CD8-positive, alpha-beta T cell (primary cell): ENCODE measurements at regions of chr20 and their contacts with region 1.

Region 1: DNA sequence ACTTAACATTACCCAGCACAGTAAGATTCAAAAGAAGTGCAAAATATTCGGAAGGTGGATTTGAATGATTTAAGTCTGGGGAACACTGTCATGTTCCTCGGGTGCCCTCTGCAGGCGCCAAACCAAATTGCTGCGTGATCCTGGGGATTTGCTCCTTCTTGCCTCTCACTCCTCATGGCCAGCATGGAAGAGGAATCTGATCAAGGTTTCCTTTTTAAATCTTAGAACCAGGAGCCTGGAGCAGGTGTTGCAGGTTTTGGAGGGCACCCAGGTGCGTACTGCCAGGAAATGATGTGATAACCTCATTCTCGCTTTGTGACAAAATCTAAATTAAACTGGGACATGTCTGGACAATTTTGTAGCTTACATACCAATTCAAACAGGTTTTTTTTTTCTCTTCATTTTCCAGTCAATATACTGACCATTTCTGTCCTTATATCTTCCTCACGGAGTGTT is 8.1 kb upstream of the PFDN4 start:
- DNase-seq: peak; percentile 46 to 80 (median 69)
- ATAC-seq: peak; percentile 63
- H3K4me3 ChIP-seq: no peak overlapping the region
- H3K4me3 Mint-ChIP-seq: no peak overlapping the region
- H3K27ac ChIP-seq: no peak overlapping the region
- H3K27ac Mint-ChIP-seq: no peak overlapping the region
- H3K4me1 ChIP-seq: no peaks in the 10 kb centered on the region
- H3K4me1 Mint-ChIP-seq: no peaks in the 10 kb centered on the region
- H3K27me3 ChIP-seq: no peaks in the 10 kb centered on the region
- H3K27me3 Mint-ChIP-seq: peaks cover 2% of the 10 kb centered on the region
- CTCF ChIP-seq: peak; percentile 95

Region 2: DNA sequence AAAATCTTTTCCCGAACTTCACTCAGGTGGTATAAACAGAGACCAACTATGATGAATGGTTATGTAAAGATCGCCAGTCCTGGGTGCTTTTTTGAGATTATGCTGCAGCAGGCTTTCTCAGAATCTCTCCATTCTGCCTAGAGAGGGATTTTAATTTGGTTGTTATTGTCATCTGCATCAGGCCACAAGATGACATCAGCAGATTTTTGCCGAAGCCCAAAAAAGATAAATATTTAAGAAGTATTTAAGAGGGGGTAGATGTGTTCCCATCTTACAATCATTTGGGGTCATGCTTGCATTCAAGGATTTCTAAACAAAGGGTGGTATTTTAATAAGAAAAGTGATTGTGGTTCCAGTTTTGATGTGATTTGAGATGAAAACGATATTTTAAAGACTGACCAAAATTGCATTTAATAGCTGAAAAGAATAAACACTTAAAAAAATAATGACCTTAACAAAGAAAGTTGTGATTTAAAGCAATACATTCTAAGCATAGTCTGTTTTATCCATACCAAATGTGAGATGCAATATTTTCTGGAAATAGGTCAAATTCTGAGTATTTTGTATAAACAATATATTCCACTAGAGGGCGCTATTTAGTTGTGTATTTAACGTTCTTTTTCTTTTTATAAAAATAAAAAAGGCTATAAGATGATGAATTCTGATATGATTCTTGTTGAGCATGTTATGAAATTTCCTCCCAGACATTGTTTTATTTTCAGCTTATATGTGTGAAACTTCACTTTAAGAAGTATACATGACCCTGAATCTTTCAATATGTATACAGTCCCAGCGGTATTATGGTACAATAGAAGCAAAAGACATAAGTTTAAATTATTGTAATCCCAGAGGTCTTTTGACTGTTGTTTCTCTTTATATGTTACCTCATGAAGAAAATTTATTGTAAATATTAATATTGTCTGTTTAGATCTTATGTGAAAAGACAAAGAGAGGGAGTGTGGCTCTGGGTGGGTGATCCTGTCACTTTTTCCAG is 1957.2 kb before region 1 on chr20:
- CTCF ChIA-PET with region 1: interaction called, 3 read pairs
- POLR2A ChIA-PET with region 1: no interaction called
- intact Hi-C with region 1: loop called (anchors 2 kb)
- DNase-seq: peak in 2 of 9 experiments; percentile 16 to 30
- ATAC-seq: no peak
- H3K4me3 ChIP-seq: no peak overlapping the region
- H3K4me3 Mint-ChIP-seq: no peak overlapping the region
- H3K27ac ChIP-seq: no peak overlapping the region
- H3K27ac Mint-ChIP-seq: no peak overlapping the region
- H3K4me1 ChIP-seq: no peaks in the 10 kb centered on the region
- H3K4me1 Mint-ChIP-seq: no peaks in the 10 kb centered on the region
- H3K27me3 ChIP-seq: no peaks in the 10 kb centered on the region
- H3K27me3 Mint-ChIP-seq: peaks cover 10% of the 10 kb centered on the region
- CTCF ChIP-seq: peak; percentile 84

Region 3: GRCh38 chr20:53216856-53217576 is 982.7 kb before region 1 on chr20:
- CTCF ChIA-PET with region 1: interaction called, 3 read pairs
- POLR2A ChIA-PET with region 1: no interaction called
- intact Hi-C with region 1: loop called in 1 of 2 experiments (anchors 10 kb)
- DNase-seq: peak; percentile 72 to 92 (median 80)
- ATAC-seq: peak; percentile 89
- H3K4me3 ChIP-seq: peak overlapping the region in 1 of 2 experiments; percentile 13
- H3K4me3 Mint-ChIP-seq: peak overlapping the region; percentile 60
- H3K27ac ChIP-seq: no peak overlapping the region
- H3K27ac Mint-ChIP-seq: no peak overlapping the region
- H3K4me1 ChIP-seq: peaks cover 22% of the 10 kb centered on the region
- H3K4me1 Mint-ChIP-seq: peaks cover 18% of the 10 kb centered on the region
- H3K27me3 ChIP-seq: no peaks in the 10 kb centered on the region
- H3K27me3 Mint-ChIP-seq: peaks cover 11% of the 10 kb centered on the region
- CTCF ChIP-seq: peak; percentile 97

Region 4: GRCh38 chr20:53939572-53940359 is 260.0 kb before region 1 on chr20:
- CTCF ChIA-PET with region 1: no interaction called
- POLR2A ChIA-PET with region 1: no interaction called
- intact Hi-C with region 1: loop called in 1 of 2 experiments (anchors 5 kb)
- DNase-seq: peak; percentile 38 to 83 (median 67)
- ATAC-seq: peak; percentile 76
- H3K4me3 ChIP-seq: no peak overlapping the region
- H3K4me3 Mint-ChIP-seq: no peak overlapping the region
- H3K27ac ChIP-seq: no peak overlapping the region
- H3K27ac Mint-ChIP-seq: no peak overlapping the region
- H3K4me1 ChIP-seq: peaks cover 31% of the 10 kb centered on the region
- H3K4me1 Mint-ChIP-seq: peaks cover 43% of the 10 kb centered on the region
- H3K27me3 ChIP-seq: no peaks in the 10 kb centered on the region
- H3K27me3 Mint-ChIP-seq: no peaks in the 10 kb centered on the region
- CTCF ChIP-seq: peak; percentile 75

Region 5: DNA sequence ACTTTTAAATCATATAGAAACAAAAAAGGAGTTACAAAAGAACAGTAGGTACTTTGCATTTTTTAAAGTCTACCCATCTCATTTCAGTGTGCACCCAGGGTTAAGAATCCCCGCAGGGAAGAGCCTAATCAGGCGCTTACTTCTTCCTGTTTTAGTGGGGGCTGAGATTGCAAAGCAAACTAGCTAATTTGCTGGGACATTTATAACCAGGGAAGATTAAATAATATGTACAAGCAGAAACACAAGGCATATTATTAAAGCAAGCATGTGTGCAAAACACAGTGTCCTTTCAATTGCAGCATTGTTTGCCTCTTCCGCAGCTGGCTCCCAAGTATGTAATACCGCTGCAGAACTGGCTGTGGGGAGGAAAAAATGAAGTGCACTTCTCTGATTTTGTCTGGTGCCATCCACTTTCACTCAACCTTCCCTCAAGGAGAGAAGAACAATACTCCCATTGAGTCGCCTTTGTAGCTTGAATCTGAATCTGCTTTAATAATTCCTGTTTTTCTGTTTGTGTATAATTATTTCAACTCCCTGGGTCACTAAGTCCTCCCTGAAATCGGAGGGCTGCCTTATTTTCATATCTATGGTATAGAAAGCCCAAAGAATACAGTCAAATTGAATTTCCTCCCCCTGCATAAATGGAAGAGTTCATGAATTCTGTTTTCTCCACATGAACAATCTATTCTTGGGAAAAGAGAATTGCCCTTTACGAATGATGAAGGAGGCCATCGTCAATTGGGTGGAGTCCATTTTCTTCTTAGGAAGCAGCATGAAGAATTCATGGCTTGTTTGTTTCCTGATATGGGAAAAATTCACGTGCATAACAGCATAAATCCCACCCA is 106.1 kb before region 1 on chr20:
- CTCF ChIA-PET with region 1: interaction called, 28 read pairs
- POLR2A ChIA-PET with region 1: no interaction called
- intact Hi-C with region 1: loop called (anchors 1 kb)
- DNase-seq: no peak
- ATAC-seq: no peak
- H3K4me3 ChIP-seq: no peak overlapping the region
- H3K4me3 Mint-ChIP-seq: no peak overlapping the region
- H3K27ac ChIP-seq: no peak overlapping the region
- H3K27ac Mint-ChIP-seq: no peak overlapping the region
- H3K4me1 ChIP-seq: no peaks in the 10 kb centered on the region
- H3K4me1 Mint-ChIP-seq: peaks cover 2% of the 10 kb centered on the region
- H3K27me3 ChIP-seq: no peaks in the 10 kb centered on the region
- H3K27me3 Mint-ChIP-seq: peaks cover 7% of the 10 kb centered on the region
- CTCF ChIP-seq: no peak

Region 6: DNA sequence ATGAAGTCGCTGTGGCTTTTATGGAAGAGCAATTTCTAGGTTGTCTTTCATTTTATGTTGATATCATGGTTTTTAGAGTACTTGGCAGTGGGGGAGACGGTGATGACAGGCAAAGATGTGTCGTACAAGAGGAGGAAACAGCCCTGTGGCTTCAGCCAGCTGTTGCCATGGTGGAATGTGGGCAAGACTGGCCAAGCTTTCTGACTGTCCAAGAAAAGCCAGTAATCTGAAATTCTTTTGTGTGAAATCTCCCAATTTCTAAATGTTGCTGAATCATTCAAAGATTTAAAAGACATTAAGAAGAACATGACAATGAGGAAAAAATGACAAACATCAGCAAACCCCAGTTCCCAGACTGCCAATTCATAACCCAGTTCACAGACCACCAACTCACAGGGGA is 31.3 kb after region 1 on chr20:
- CTCF ChIA-PET with region 1: no interaction called
- POLR2A ChIA-PET with region 1: no interaction called
- intact Hi-C with region 1: no loop called
- DNase-seq: no peak
- ATAC-seq: no peak
- H3K4me3 ChIP-seq: no peak overlapping the region
- H3K4me3 Mint-ChIP-seq: no peak overlapping the region
- H3K27ac ChIP-seq: no peak overlapping the region
- H3K27ac Mint-ChIP-seq: no peak overlapping the region
- H3K4me1 ChIP-seq: no peaks in the 10 kb centered on the region
- H3K4me1 Mint-ChIP-seq: no peaks in the 10 kb centered on the region
- H3K27me3 ChIP-seq: no peaks in the 10 kb centered on the region
- H3K27me3 Mint-ChIP-seq: peaks cover 12% of the 10 kb centered on the region
- CTCF ChIP-seq: no peak